Activated CD4-positive, alpha-beta memory T cell treated with anti-CD3 and anti-CD28 coated beads for 36 hours (primary cell): ENCODE measurements at regions of chr6 and their contacts with region 1.

Region 1: GRCh38 chr6:137313928-137314855 is 95.0 kb upstream of the IFNGR1 start:
- DNase-seq: peak; percentile 80
- H3K4me3 Mint-ChIP-seq: no peak overlapping the region
- H3K27ac Mint-ChIP-seq: no peak overlapping the region
- H3K4me1 Mint-ChIP-seq: no peaks in the 10 kb centered on the region
- H3K27me3 Mint-ChIP-seq: no peaks in the 10 kb centered on the region

Region 2: GRCh38 chr6:136967876-136968752 is 346.1 kb before region 1 on chr6:
- CTCF ChIA-PET with region 1: no interaction called
- POLR2A ChIA-PET with region 1: no interaction called
- intact Hi-C with region 1: loop called (anchors 1 kb)
- DNase-seq: peak; percentile 79
- H3K4me3 Mint-ChIP-seq: no peak overlapping the region
- H3K27ac Mint-ChIP-seq: no peak overlapping the region
- H3K4me1 Mint-ChIP-seq: peaks cover 4% of the 10 kb centered on the region
- H3K27me3 Mint-ChIP-seq: peaks cover 21% of the 10 kb centered on the region

Region 3: GRCh38 chr6:137051790-137052472 is 262.3 kb before region 1 on chr6:
- CTCF ChIA-PET with region 1: no interaction called
- POLR2A ChIA-PET with region 1: no interaction called
- intact Hi-C with region 1: no loop called
- DNase-seq: no peak
- H3K4me3 Mint-ChIP-seq: no peak overlapping the region
- H3K27ac Mint-ChIP-seq: no peak overlapping the region
- H3K4me1 Mint-ChIP-seq: no peaks in the 10 kb centered on the region
- H3K27me3 Mint-ChIP-seq: peaks cover 45% of the 10 kb centered on the region

Region 4: GRCh38 chr6:137094411-137095008 is 219.7 kb before region 1 on chr6:
- CTCF ChIA-PET with region 1: interaction called, 42 read pairs
- POLR2A ChIA-PET with region 1: no interaction called
- intact Hi-C with region 1: loop called (anchors 1 kb)
- DNase-seq: peak; percentile 68
- H3K4me3 Mint-ChIP-seq: no peak overlapping the region
- H3K27ac Mint-ChIP-seq: no peak overlapping the region
- H3K4me1 Mint-ChIP-seq: peaks cover 22% of the 10 kb centered on the region
- H3K27me3 Mint-ChIP-seq: peaks cover 2% of the 10 kb centered on the region

Region 5: DNA sequence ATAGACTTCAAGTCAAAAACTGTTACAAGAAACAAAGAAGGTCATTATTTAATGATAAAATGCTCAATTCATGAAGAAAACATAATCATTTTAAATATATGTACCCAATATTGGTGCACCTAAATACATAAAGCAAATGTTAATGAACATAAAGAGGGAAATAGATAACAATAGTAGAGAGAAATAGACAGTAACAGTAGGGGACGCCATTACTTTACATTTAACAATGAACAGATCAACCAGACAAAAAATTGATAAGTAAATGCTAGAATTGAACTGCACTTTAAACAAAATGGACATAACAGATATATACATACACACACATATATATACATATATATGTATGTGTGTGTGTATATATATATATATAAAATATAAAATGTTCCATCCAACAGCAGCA is 178.1 kb before region 1 on chr6:
- CTCF ChIA-PET with region 1: interaction called, 3 read pairs
- POLR2A ChIA-PET with region 1: no interaction called
- intact Hi-C with region 1: loop called (anchors 1 kb)
- DNase-seq: no peak
- H3K4me3 Mint-ChIP-seq: no peak overlapping the region
- H3K27ac Mint-ChIP-seq: no peak overlapping the region
- H3K4me1 Mint-ChIP-seq: no peaks in the 10 kb centered on the region
- H3K27me3 Mint-ChIP-seq: peaks cover 15% of the 10 kb centered on the region

Region 6: DNA sequence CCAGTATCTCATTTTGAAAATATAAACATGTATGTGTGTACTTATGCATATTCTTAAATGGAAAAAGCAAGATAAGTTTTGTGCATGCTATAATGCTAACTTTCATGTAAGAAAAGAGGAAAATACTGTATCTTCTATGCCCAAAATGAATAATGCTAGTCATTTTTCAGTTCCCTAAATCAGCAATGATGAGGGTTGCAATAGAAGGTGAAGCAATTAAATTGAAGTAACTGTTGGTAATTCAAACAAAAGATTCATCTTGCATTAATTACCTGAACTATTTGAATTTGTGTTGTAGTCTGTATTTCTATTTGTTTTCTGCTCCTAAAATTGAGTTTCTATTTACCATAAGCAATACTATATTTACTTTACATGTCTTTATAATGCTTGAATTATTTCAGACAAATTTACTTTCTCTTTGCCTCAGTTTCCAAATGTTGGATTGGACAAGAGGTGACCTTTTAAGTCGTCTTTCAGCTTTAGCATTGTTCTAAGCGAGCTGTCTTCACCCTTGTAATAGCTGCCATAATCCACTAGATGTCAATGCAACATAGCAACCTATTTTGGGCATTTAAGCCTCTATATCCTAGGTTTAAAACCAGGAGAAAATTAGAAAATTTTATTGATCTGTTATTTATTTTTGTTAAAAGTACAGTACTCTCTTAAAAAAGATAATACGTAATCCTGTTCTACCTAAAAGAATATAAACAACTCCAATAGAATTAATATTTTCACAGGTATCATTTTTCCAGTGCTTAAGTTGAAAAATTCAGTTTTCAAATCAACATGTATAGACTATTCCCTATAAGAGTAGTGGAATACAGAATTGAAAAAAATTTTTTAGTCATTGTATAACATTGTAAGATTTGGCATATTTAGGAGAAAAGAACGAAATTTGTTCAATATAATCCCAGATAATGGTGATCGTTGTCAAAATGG is 42.7 kb before region 1 on chr6:
- CTCF ChIA-PET with region 1: interaction called, 56 read pairs
- POLR2A ChIA-PET with region 1: no interaction called
- intact Hi-C with region 1: loop called (anchors 1 kb)
- DNase-seq: no peak
- H3K4me3 Mint-ChIP-seq: no peak overlapping the region
- H3K27ac Mint-ChIP-seq: no peak overlapping the region
- H3K4me1 Mint-ChIP-seq: peaks cover 10% of the 10 kb centered on the region
- H3K27me3 Mint-ChIP-seq: peaks cover 5% of the 10 kb centered on the region

Region 7: DNA sequence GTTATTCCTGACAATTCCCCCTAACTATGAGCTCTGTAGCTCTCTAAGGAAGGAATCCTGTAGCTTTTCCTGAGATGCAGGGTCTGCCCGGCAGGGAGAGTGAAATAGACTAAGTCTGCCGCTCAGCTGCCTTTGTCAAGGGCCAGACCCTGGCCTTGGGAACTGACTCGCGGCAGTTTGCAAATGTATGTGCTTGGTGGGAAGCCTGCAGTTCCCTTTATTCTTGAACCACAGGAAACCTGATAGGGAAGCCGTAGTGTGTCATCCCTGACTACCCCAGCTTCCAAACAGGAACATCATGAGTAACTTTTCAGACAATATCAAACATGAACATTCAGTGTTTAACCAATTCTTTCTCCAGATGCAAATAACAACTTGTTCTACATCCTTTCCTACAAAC is 16.3 kb before region 1 on chr6:
- CTCF ChIA-PET with region 1: interaction called, 11 read pairs
- POLR2A ChIA-PET with region 1: no interaction called
- intact Hi-C with region 1: no loop called
- DNase-seq: no peak
- H3K4me3 Mint-ChIP-seq: no peak overlapping the region
- H3K27ac Mint-ChIP-seq: no peak overlapping the region
- H3K4me1 Mint-ChIP-seq: no peaks in the 10 kb centered on the region
- H3K27me3 Mint-ChIP-seq: no peaks in the 10 kb centered on the region